Aorta (tissue), 5 donors: ENCODE measurements at regions of chr1 and their contacts with region 1.

Region 1: DNA sequence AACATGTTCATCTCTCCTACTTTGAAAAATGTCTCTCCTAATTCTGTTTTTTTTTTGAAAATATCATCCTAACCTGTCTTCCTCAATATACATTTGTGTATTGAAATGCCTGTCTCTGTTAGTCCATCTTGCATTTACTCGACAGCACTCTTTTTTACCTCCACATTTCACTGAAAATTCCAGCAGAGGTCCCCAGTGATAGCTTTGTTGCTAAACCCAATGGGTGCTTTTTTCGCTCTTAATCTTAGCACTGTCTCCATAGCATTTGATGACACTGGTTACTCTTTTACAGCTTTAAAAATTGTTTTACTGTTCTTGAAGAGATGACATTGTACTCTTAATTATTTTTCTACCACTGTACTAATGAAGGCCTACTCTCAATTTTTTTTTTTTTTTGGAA is 10.8 kb downstream of the OSBPL9 start:
- DNase-seq: no peak
- ATAC-seq: no peak
- H3K4me3 ChIP-seq: no peak overlapping the region
- H3K27ac ChIP-seq: no peak overlapping the region
- H3K4me1 ChIP-seq: peaks cover 3 to 5% of the 10 kb centered on the region in 2 donors
- H3K27me3 ChIP-seq: no peaks in the 10 kb centered on the region

Region 2: GRCh38 chr1:51463561-51463960 is 164.1 kb before region 1 on chr1:
- intact Hi-C with region 1: no loop called
- DNase-seq: no peak
- ATAC-seq: peak; percentile 44
- H3K4me3 ChIP-seq: no peak overlapping the region
- H3K27ac ChIP-seq: no peak overlapping the region
- H3K4me1 ChIP-seq: no peaks in the 10 kb centered on the region
- H3K27me3 ChIP-seq: no peaks in the 10 kb centered on the region

Region 3: DNA sequence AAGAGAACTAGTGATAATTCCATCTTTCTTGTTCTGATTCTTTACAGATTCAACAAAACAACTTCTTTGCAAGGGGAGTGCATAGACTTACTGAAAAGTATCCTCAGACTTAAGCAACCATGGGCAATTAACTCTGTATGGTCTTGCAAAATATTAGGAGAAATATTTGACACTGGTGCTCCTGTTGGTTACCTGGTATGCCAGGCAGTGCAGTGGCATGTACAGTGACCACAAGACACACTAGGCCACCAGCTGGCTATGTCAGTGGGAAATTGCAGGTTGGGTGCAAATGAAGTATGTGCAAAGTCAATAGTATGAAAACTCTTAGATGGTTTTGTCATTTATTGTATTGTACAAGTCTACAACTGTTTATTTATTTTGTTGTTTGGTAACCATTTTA is 143.1 kb before region 1 on chr1:
- intact Hi-C with region 1: no loop called
- DNase-seq: no peak
- ATAC-seq: no peak
- H3K4me3 ChIP-seq: no peak overlapping the region
- H3K27ac ChIP-seq: no peak overlapping the region
- H3K4me1 ChIP-seq: peaks cover 0 to 2% of the 10 kb centered on the region in 2 donors
- H3K27me3 ChIP-seq: no peaks in the 10 kb centered on the region

Region 4: DNA sequence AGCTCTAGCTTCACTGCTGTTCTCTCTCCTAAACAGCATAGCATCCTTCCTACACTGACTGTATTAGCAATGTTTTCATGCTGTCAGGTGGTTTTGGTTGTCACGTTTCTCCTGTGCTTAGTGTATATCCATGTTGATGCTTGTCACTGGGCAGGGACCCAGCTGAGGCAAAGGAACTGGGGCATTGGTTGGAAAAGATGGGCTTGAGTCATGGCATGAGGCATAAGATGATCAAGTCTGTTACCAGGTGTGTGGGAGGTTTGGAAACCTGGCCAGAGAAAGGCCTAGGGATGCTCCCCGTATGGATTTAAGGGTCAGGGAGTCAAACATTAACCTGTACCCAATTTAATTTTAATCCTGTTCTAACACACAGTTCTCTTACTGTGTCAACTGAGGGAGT is 58.8 kb after region 1 on chr1:
- intact Hi-C with region 1: loop called in 1 of 2 experiments (anchors 10 kb)
- DNase-seq: no peak
- ATAC-seq: no peak
- H3K4me3 ChIP-seq: no peak overlapping the region
- H3K27ac ChIP-seq: no peak overlapping the region
- H3K4me1 ChIP-seq: peaks cover 0 to 2% of the 10 kb centered on the region in 2 donors
- H3K27me3 ChIP-seq: no peaks in the 10 kb centered on the region

Region 5: GRCh38 chr1:51697166-51697565 is 69.5 kb after region 1 on chr1:
- intact Hi-C with region 1: no loop called
- DNase-seq: no peak
- ATAC-seq: no peak
- H3K4me3 ChIP-seq: no peak overlapping the region
- H3K27ac ChIP-seq: no peak overlapping the region
- H3K4me1 ChIP-seq: peaks cover 4 to 5% of the 10 kb centered on the region in 2 donors
- H3K27me3 ChIP-seq: no peaks in the 10 kb centered on the region

Region 6: GRCh38 chr1:51729824-51730301 is 102.2 kb after region 1 on chr1:
- intact Hi-C with region 1: loop called in 1 of 2 experiments (anchors 10 kb)
- DNase-seq: peak in 1 of 2 donors; percentile 82
- ATAC-seq: peak; percentile 58
- H3K4me3 ChIP-seq: peak overlapping the region; percentile 82 to 89
- H3K27ac ChIP-seq: peak overlapping the region in 1 of 2 donors; percentile 58
- H3K4me1 ChIP-seq: peaks cover 6 to 7% of the 10 kb centered on the region in 2 donors
- H3K27me3 ChIP-seq: no peaks in the 10 kb centered on the region

Region 7: DNA sequence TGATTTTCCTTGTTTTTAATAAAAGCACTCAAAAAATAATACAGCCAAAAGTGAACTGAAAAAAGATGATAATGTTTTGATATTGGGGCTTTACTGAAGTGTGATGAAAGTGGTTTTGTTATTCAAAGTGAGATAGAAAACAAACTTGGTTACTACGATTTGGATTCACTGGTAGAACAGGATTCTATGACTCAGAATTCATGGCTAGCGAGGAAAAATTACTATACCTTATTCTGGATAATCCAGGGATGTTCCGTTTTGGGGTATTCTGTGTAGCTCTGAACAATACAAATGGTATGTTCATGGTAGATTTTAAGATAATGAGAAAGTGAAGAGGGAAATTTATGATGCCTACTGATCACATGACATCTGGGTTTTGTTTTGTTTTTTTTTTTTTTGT is 133.2 kb after region 1 on chr1:
- intact Hi-C with region 1: loop called (anchors 5 to 10 kb)
- DNase-seq: no peak
- ATAC-seq: no peak
- H3K4me3 ChIP-seq: no peak overlapping the region
- H3K27ac ChIP-seq: no peak overlapping the region
- H3K4me1 ChIP-seq: peaks cover 0 to 4% of the 10 kb centered on the region in 2 donors
- H3K27me3 ChIP-seq: no peaks in the 10 kb centered on the region

Region 8: GRCh38 chr1:51768971-51769588 is 141.4 kb after region 1 on chr1:
- intact Hi-C with region 1: loop called (anchors 5 to 10 kb)
- DNase-seq: no peak
- ATAC-seq: peak; percentile 83
- H3K4me3 ChIP-seq: no peak overlapping the region
- H3K27ac ChIP-seq: no peak overlapping the region
- H3K4me1 ChIP-seq: peaks cover 0 to 2% of the 10 kb centered on the region in 2 donors
- H3K27me3 ChIP-seq: no peaks in the 10 kb centered on the region